KBM-7 (cell line): ENCODE measurements at regions of chr9 and their contacts with region 1.

Region 1: DNA sequence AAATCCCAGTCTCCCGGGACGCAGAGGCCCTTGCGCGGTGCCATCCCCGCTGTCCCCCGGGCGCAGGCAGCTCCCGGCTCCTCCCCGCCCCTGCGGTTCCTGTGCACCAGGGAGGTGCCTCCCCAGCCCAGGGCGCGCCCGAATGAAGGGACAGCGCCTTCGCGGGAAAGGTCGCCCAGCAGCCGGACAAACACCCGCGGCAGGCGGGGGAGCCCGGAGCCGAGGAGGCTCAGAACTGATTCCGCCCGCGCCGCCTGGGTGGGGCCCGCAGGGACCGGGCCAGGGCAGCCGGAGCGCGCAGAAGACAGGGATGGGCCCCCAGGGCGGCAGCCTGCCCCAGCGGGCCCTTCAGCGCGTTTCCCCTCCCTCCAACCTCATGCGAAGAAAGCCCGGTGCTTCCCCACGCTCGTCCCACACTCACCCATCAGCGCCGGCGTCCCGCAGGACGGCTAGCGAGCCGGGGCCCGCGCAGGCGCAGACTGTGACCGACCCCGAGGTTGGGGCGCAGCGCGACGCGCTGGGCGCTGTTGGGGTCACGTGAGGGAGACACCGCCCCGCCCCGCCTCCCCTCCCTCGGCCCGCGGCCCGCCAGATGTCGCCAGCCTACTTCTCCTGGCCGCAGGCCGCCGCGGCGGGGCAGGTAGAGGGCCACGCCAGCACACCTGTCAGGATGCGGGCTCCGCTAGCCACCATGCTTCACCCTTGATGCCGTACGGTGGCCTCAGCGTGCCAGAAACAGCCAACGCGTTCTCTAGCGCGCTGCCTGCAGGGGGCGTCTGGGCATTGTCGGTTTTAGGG is at the start of gene SLC25A51:
- DNase-seq: peak; percentile 94

Region 2: DNA sequence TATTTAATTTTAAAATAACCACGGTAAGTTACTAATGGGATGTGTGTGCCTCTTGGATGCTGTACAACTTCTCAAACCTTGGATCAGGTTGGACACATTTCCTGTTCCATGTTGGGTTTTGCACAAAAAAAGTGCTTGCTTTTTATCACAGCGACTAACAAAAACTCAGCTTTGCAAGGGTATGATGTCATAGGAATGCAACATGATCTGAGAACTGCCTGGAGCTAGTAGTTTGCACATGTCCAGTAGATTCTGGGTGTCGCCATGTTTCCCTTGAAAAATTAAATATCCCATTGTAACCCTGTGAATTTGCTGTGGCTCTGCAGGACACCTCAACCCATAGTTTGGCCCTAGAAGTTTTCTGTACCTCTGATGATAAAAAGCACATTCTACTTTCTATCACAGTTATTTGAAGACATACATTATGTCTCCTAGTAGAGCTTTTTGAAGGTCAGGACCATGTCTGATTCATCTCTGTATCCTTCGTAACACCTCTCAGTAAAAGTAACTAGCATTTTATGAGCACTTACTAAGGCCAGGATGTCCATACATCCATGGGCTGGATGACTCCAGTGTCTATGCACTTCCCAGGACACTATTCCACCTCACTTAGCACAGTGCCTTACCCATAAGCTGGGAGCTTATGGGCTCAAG is 264.6 kb before region 1 on chr9:
- in situ Hi-C with region 1: no loop called
- DNase-seq: no peak

Region 3: DNA sequence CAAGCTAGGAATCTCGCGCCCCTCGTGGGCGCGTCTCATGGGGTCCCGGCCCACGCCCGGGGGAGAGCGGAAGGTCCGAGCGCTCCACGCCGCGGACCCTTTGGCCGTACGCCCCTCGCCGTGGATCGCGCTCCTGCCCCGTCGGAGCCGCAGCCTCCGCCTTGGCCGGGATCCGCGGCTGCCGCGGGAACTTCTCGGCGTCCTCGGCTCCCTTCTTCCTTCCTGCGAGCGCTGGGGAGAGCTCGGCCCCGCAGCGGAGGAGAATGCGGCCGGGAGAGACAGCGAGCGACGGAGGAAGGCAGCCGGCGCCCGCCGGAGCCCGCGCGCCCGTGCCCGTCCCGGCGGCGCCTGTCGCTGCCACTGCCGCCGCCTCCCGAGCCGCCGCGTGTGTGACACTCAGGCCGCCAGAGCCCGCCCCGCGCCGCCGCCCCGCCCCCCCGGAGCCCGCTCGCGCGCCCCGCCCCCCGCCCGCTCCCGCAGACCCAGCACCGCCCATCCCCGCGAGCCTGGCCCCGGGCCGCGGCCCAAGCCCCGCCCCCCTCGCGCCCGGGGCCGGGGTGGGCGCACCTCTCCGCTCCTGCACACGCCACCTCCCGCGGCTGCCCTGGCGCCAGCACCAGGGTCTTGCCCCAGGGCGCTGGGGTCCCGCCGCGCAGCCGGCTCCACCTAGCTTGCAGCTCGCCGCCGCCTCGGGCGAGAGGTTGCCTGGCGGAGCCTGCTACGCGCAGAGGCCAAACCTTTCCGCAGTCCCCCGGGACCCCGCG is 165.2 kb after region 1 on chr9 and contains the start of gene SHB:
- in situ Hi-C with region 1: loop called (anchors 10 kb)
- DNase-seq: peak; percentile 57

Region 4: GRCh38 chr9:38160613-38161215 is 256.9 kb after region 1 on chr9:
- in situ Hi-C with region 1: no loop called
- DNase-seq: peak; percentile 57

Region 5: DNA sequence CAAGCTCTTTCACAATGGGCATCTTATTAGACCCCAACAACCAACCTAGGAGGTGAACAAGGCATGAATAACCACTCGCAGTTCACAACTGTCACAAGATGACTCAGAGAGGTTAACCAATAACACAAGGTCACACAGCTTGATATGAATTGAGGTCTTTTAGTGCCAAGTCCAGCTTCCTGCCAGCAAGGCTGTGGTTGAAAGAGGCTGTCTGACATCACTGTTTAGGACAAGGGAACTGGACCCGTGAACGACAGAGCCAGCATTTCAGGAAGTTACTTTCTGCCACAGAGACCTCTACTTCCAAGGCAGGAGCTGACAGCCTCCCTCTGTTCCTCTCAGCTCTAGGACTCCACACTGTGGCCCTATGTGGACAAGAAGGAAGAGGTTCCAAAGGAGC is 435.2 kb after region 1 on chr9:
- in situ Hi-C with region 1: loop called (anchors 25 kb)
- DNase-seq: no peak